ENCODE measurements at regions of chr6 and their contacts with region 1.

Region 1: GRCh38 chr6:27146706-27147505 is 100.6 kb upstream of the PRSS16 start:
- DNase-seq: peak; percentile 42 to 93 (median 89)
- H3K4me3 ChIP-seq: peak overlapping the region; percentile 97
- H3K4me3 Mint-ChIP-seq: no peak overlapping the region
- H3K27ac ChIP-seq: peak overlapping the region; percentile 91
- H3K27ac Mint-ChIP-seq: no peak overlapping the region
- H3K4me1 ChIP-seq: peaks cover 20% of the 10 kb centered on the region
- H3K4me1 Mint-ChIP-seq: peaks cover 7 to 21% (median 10%) of the 10 kb centered on the region in 3 donors
- H3K27me3 ChIP-seq: no peaks in the 10 kb centered on the region
- H3K27me3 Mint-ChIP-seq: no peaks in the 10 kb centered on the region

Region 2: DNA sequence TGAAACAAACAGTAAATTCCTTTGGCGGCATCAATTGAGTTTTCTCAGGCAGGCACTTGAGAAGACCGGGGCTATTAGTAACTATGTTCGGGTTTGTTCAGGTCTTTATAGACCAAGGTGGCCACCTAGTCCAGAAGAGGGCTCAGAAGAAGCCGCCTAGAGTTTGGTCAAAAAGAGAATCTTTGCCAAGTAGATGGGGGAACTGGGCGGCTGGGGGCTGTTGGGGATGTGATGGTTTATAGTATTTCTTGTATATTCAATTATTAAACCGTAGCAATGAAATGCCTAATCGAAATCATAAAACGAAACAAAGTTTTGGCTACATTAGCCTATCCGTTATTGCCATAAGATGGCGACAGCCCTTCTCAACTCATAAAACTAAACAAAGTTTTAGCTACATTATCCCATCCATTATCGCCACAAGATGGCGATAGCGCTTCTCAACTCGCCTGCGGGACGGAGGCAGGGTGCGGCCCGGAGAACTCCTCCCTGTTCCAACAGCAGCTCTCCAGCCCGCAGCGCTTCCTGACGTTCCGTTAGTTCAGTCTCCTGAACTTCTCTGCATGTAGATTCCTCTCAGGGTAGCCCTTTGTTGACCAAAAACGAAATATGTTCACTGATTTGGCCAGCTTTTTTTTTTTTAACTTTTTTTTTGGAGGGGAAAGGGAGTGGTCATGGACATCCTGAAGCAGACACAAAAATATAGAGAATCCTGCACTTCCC is 19.9 kb before region 1 on chr6:
- CTCF ChIA-PET with region 1: interaction called, 80 read pairs
- POLR2A ChIA-PET with region 1: interaction called, 231 read pairs
- DNase-seq: peak; percentile 71 to 87 (median 77)
- H3K4me3 ChIP-seq: peak overlapping the region; percentile 54
- H3K4me3 Mint-ChIP-seq: peak overlapping the region; percentile 69 to 80 (median 77)
- H3K27ac ChIP-seq: peak overlapping the region; percentile 89
- H3K27ac Mint-ChIP-seq: peak overlapping the region; percentile 21 to 90 (median 86)
- H3K4me1 ChIP-seq: peaks cover 15% of the 10 kb centered on the region
- H3K4me1 Mint-ChIP-seq: peaks cover 16 to 21% (median 18%) of the 10 kb centered on the region in 3 donors
- H3K27me3 ChIP-seq: no peaks in the 10 kb centered on the region
- H3K27me3 Mint-ChIP-seq: no peaks in the 10 kb centered on the region

Region 3: GRCh38 chr6:27132532-27133280 is 14.2 kb before region 1 on chr6:
- CTCF ChIA-PET with region 1: interaction called, 80 read pairs
- POLR2A ChIA-PET with region 1: interaction called, 231 read pairs
- DNase-seq: peak; percentile 77 to 98 (median 96)
- H3K4me3 ChIP-seq: peak overlapping the region; percentile 75
- H3K4me3 Mint-ChIP-seq: no peak overlapping the region
- H3K27ac ChIP-seq: peak overlapping the region; percentile 89
- H3K27ac Mint-ChIP-seq: no peak overlapping the region
- H3K4me1 ChIP-seq: peaks cover 20% of the 10 kb centered on the region
- H3K4me1 Mint-ChIP-seq: peaks cover 7 to 21% (median 16%) of the 10 kb centered on the region in 3 donors
- H3K27me3 ChIP-seq: no peaks in the 10 kb centered on the region
- H3K27me3 Mint-ChIP-seq: peaks cover 0 to 2% of the 10 kb centered on the region in 2 donors

Region 4: DNA sequence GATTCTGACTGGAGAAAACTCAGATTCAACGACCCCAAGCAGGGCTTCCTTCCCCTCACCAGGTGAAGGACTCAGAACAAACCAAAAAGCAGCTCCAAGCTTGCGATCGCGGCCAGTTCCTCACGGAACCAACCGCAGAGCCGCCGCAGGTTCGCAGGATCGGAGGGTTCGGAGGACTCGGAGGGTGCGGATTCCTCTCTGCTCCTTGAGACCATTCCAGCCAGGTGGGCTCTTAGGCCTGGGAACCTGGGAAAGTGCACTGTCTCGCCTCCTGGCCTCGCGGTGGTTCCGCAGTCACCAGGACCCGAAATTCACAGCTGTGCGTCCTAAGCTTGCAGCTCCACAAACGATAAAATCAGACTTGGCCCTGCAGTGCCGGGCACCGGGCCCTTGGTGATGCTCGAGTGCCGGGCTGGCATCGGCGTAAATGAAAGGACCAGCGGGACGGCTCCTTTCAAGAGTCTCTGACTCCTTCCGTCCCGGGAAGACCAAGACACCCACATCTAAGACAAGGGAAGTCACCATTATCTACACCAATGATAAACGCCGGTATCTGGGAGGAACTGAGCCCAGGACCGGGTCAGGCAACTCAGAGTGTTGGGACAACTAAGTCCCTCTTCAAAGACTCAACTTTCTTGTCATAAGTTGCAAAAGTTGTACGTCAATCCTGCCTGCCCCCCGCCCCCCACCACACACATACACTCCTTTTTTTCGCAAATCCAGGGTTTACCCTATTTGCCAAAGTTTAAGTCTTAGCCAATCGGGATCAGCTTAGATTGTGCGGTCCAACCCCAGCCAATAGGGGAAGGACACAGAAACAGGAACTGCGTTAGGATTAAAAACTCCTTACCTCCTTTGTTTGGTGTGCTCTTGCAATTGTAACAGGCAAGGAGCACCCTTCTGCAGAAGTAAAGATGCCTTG is 30.8 kb after region 1 on chr6:
- CTCF ChIA-PET with region 1: interaction called, 5 read pairs
- POLR2A ChIA-PET with region 1: interaction called, 13 read pairs
- DNase-seq: peak; percentile 56 to 80 (median 71)
- H3K4me3 ChIP-seq: peak overlapping the region; percentile 100
- H3K4me3 Mint-ChIP-seq: peak overlapping the region; percentile 93 to 100 (median 97)
- H3K27ac ChIP-seq: peak overlapping the region; percentile 89
- H3K27ac Mint-ChIP-seq: peak overlapping the region; percentile 75 to 100 (median 92)
- H3K4me1 ChIP-seq: no peaks in the 10 kb centered on the region
- H3K4me1 Mint-ChIP-seq: peaks cover 12 to 26% (median 16%) of the 10 kb centered on the region in 3 donors
- H3K27me3 ChIP-seq: no peaks in the 10 kb centered on the region
- H3K27me3 Mint-ChIP-seq: peaks cover 3 to 18% of the 10 kb centered on the region in 2 donors

Region 5: DNA sequence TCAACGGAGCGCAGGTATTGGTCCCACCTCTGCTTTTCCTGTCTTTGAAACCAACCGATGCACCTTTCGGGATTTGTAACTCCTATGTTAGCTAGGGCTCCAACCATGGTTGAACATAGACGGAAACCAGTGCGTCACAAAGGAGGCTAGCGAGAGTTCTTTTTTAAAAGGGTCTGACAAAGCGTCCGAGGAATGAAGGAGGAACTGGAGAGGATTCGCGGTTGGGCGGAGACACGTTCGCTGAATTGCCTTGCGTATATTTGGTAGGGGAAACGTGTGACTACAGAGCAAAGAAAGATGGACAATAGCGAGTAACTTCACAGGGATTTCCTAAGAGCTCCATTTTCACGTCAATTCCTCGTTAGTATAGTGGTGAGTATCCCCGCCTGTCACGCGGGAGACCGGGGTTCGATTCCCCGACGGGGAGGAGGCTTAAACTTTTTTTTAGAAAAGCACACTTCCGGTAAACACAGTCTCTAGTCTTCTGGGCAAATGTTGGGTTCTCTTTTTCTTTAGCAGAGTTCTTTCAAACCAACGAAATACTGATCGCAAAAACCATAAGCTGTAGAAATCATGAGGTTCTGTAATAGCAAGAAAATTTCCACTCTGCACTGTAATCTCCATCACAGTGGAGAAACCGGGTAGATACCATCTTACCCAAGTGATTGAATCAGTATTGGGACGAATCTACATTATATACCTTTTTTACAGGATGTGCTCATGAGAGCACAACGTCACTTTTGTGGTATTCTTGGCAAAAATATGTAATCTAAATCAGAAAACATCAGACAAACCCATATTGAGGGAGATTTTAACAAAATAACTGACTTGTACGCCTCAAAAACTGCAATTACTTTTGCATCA is 332.6 kb after region 1 on chr6:
- CTCF ChIA-PET with region 1: interaction called, 3 read pairs
- POLR2A ChIA-PET with region 1: interaction called, 10 read pairs
- DNase-seq: peak; percentile 75 to 92 (median 87)
- H3K4me3 ChIP-seq: peak overlapping the region; percentile 77
- H3K4me3 Mint-ChIP-seq: no peak overlapping the region
- H3K27ac ChIP-seq: peak overlapping the region; percentile 98
- H3K27ac Mint-ChIP-seq: no peak overlapping the region
- H3K4me1 ChIP-seq: peaks cover 17% of the 10 kb centered on the region
- H3K4me1 Mint-ChIP-seq: peaks cover 0 to 8% (median 4%) of the 10 kb centered on the region in 3 donors
- H3K27me3 ChIP-seq: no peaks in the 10 kb centered on the region
- H3K27me3 Mint-ChIP-seq: no peaks in the 10 kb centered on the region

Region 6: DNA sequence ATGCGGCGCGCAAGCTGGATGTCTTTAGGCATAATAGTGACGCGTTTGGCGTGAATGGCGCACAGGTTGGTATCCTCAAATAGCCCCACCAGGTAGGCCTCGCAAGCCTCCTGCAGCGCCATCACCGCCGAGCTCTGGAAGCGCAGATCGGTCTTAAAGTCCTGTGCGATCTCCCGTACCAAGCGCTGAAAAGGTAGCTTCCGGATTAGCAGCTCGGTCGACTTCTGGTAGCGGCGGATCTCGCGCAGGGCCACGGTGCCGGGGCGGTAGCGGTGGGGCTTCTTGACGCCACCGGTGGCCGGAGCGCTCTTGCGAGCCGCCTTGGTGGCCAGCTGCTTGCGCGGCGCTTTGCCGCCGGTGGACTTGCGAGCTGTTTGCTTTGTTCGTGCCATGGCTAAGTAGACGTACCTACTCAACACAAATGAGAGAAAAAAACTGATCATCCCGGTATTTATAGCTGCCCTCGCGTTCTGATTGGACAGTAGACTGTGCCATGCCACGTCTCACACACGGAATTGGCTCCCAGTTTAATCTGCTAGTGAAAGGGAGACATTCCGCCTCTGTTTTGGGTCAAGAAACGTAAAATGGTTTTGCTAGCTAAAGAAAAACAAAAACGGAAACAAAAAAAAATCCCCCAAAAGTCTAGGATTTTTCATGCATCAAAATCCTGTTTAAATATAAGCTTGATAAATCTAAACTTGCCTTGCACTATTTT is 725.2 kb after region 1 on chr6:
- CTCF ChIA-PET with region 1: interaction called, 3 read pairs
- POLR2A ChIA-PET with region 1: interaction called, 36 read pairs
- DNase-seq: peak; percentile 69 to 95 (median 91)
- H3K4me3 ChIP-seq: peak overlapping the region; percentile 71
- H3K4me3 Mint-ChIP-seq: peak overlapping the region; percentile 82 to 95 (median 88)
- H3K27ac ChIP-seq: peak overlapping the region; percentile 71
- H3K27ac Mint-ChIP-seq: peak overlapping the region; percentile 90 to 99 (median 94)
- H3K4me1 ChIP-seq: peaks cover 24% of the 10 kb centered on the region
- H3K4me1 Mint-ChIP-seq: peaks cover 31 to 39% (median 37%) of the 10 kb centered on the region in 3 donors
- H3K27me3 ChIP-seq: no peaks in the 10 kb centered on the region
- H3K27me3 Mint-ChIP-seq: peaks cover 0 to 3% of the 10 kb centered on the region in 2 donors

Measured in CD8-positive, alpha-beta memory T cell (primary cell).